ENCODE measurements at regions of chr4 and their contacts with region 1.

Region 1: DNA sequence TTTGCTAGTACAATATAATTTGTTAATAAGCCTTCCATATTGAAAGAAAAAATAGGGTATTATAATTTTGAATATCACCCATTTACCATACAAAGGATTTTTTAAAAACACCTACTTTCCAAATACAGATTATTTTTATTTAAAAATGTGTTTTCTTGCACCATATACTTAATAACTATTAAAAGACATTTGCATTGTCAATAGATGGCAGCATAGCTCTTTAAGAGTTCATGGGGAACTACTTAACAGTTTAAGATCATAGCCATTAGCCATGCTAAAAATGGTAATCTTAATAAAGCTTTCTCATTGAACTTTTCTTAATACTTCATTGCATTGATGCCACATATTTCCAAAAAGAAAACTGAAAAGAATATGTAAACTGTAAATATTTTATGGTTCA is 1995.9 kb downstream of the C4orf33 start:
- DNase-seq: peak; percentile 64
- H3K4me3 ChIP-seq: no peak overlapping the region
- H3K27ac ChIP-seq: no peak overlapping the region
- H3K4me1 ChIP-seq: no peaks in the 10 kb centered on the region
- H3K27me3 ChIP-seq: no peaks in the 10 kb centered on the region
- CTCF ChIP-seq: peak; percentile 66

Region 2: DNA sequence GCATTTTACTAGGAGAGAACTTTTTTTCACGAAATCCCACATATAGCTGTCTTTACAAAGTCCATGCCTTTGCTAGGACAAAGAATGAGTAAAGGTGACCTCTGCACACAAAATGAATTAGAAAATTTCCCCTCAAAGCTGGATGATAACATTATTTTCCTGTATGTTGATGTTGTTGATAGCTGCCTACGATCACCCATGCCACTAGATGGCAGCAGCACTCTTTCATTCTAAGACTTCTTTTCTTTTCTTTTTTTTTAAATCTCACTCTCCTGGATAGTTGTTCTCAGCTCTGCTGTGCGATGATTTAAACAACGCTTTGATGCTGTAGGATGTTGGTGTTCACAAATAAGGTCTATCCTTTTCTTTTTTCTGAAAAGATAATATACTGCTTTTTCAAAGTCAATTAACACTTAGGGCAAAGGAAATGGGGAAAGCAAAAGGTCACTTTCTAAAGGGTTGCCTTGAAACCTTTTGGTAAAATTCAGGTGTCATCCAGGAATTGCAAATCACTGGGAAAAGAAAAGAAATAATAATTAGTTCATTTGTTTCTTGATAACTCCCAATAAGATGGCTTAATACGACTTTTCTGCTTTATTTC is 1729.1 kb before region 1 on chr4:
- CTCF ChIA-PET with region 1: no interaction called
- POLR2A ChIA-PET with region 1: no interaction called
- intact Hi-C with region 1: loop called (anchors 2 kb)
- DNase-seq: peak; percentile 76
- H3K4me3 ChIP-seq: no peak overlapping the region
- H3K27ac ChIP-seq: no peak overlapping the region
- H3K4me1 ChIP-seq: no peaks in the 10 kb centered on the region
- H3K27me3 ChIP-seq: no peaks in the 10 kb centered on the region
- CTCF ChIP-seq: peak; percentile 88

Region 3: GRCh38 chr4:130563185-130563888 is 528.6 kb before region 1 on chr4:
- CTCF ChIA-PET with region 1: no interaction called
- POLR2A ChIA-PET with region 1: no interaction called
- intact Hi-C with region 1: loop called (anchors 5 kb)
- DNase-seq: peak; percentile 83
- H3K4me3 ChIP-seq: peak overlapping the region; percentile 39
- H3K27ac ChIP-seq: no peak overlapping the region
- H3K4me1 ChIP-seq: no peaks in the 10 kb centered on the region
- H3K27me3 ChIP-seq: no peaks in the 10 kb centered on the region
- CTCF ChIP-seq: peak; percentile 74

Region 4: GRCh38 chr4:131644619-131645018 is 552.7 kb after region 1 on chr4:
- CTCF ChIA-PET with region 1: no interaction called
- POLR2A ChIA-PET with region 1: no interaction called
- intact Hi-C with region 1: loop called (anchors 10 kb)
- DNase-seq: peak; percentile 9
- H3K4me3 ChIP-seq: no peak overlapping the region
- H3K27ac ChIP-seq: no peak overlapping the region
- H3K4me1 ChIP-seq: no peaks in the 10 kb centered on the region
- H3K27me3 ChIP-seq: no peaks in the 10 kb centered on the region
- CTCF ChIP-seq: peak; percentile 45

Region 5: DNA sequence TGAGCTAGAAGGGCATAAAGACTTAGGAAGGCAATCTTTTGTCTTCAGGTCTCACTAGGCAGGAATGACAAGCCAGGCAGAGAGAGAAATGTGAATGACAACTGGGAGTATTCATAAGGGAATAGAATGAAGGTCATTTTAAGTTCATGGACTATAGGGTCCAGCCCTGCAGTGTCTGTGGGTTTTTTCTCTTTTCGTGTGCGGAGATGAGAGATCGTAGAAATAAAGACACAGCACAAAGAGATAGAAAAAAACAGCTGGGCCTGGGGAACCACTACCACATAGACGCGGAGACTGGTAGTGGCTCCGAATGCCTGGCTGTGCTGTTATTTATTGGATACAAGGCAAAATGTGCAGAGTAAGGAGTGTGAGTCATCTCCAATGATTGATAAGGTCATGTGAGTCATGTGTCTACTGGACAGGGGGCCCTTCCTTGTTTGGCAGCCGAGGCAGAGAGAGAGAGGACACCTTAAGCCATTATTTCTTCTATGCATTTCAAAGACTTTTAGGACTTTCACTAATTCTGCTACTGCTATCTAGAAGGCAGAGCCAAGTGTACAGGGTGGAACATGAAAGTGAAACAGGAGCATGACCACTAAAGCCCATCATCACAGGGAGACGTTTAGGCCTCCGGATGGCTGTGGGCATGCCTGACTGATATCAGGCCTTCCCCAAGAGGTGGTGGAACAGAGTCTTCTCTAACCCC is 1135.4 kb after region 1 on chr4:
- CTCF ChIA-PET with region 1: no interaction called
- POLR2A ChIA-PET with region 1: no interaction called
- intact Hi-C with region 1: loop called (anchors 5 kb)
- DNase-seq: no peak
- H3K4me3 ChIP-seq: peak overlapping the region; percentile 26
- H3K27ac ChIP-seq: no peak overlapping the region
- H3K4me1 ChIP-seq: no peaks in the 10 kb centered on the region
- H3K27me3 ChIP-seq: no peaks in the 10 kb centered on the region
- CTCF ChIP-seq: no peak

Region 6: DNA sequence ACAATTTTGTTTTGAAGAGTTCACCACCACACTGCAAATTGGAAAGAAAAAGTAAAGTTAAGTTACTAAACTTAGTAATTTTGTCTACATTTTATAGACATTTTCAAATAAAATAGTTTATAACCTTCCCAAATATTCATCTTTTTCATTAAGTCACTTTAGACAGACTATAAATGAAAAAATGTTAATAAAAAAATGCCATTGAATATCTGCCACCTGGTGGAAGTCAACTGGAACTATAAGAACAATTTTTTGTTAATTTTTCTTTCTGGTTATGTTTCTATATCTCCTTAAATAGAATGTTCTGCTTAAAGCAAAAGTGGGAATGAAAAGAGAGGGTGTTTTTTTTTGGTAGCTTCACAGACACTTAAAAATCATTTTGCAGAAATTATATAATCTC is 1522.8 kb after region 1 on chr4:
- CTCF ChIA-PET with region 1: no interaction called
- POLR2A ChIA-PET with region 1: no interaction called
- intact Hi-C with region 1: loop called (anchors 10 kb)
- DNase-seq: no peak
- H3K4me3 ChIP-seq: no peak overlapping the region
- H3K27ac ChIP-seq: no peak overlapping the region
- H3K4me1 ChIP-seq: no peaks in the 10 kb centered on the region
- H3K27me3 ChIP-seq: no peaks in the 10 kb centered on the region
- CTCF ChIP-seq: peak; percentile 56